ENCODE measurements at regions of chr4 and their contacts with region 1.

Region 1: GRCh38 chr4:119286377-119287002 is 35.4 kb downstream of the FABP2 start:
- DNase-seq: peak in 1 of 2 donors; percentile 77
- ATAC-seq: peak in 1 of 3 donors; percentile 58
- H3K4me3 ChIP-seq: no peak overlapping the region
- H3K4me3 Mint-ChIP-seq: no peak overlapping the region
- H3K27ac ChIP-seq: no peak overlapping the region
- H3K27ac Mint-ChIP-seq: no peak overlapping the region
- H3K4me1 ChIP-seq: no peaks in the 10 kb centered on the region
- H3K4me1 Mint-ChIP-seq: peaks cover 6 to 8% of the 10 kb centered on the region in 2 donors
- H3K27me3 ChIP-seq: no peaks in the 10 kb centered on the region
- H3K27me3 Mint-ChIP-seq: no peaks in the 10 kb centered on the region
- CTCF ChIP-seq: peak; percentile 76

Region 2: GRCh38 chr4:118981839-118982381 is 304.6 kb before region 1 on chr4:
- intact Hi-C with region 1: loop called (anchors 1 kb)
- DNase-seq: peak in 1 of 2 donors; percentile 70
- ATAC-seq: peak; percentile 72 to 85 (median 76)
- H3K4me3 ChIP-seq: no peak overlapping the region
- H3K4me3 Mint-ChIP-seq: no peak overlapping the region
- H3K27ac ChIP-seq: no peak overlapping the region
- H3K27ac Mint-ChIP-seq: no peak overlapping the region
- H3K4me1 ChIP-seq: no peaks in the 10 kb centered on the region
- H3K4me1 Mint-ChIP-seq: no peaks in the 10 kb centered on the region
- H3K27me3 ChIP-seq: no peaks in the 10 kb centered on the region
- H3K27me3 Mint-ChIP-seq: peaks cover 11 to 13% of the 10 kb centered on the region in 2 donors
- CTCF ChIP-seq: peak; percentile 64

Region 3: GRCh38 chr4:119041951-119042560 is 244.4 kb before region 1 on chr4:
- intact Hi-C with region 1: loop called (anchors 1 kb)
- DNase-seq: peak in 1 of 2 donors; percentile 85
- ATAC-seq: peak; percentile 80 to 89 (median 88)
- H3K4me3 ChIP-seq: no peak overlapping the region
- H3K4me3 Mint-ChIP-seq: no peak overlapping the region
- H3K27ac ChIP-seq: no peak overlapping the region
- H3K27ac Mint-ChIP-seq: no peak overlapping the region
- H3K4me1 ChIP-seq: peaks cover 3% of the 10 kb centered on the region
- H3K4me1 Mint-ChIP-seq: no peaks in the 10 kb centered on the region
- H3K27me3 ChIP-seq: no peaks in the 10 kb centered on the region
- H3K27me3 Mint-ChIP-seq: peaks cover 0 to 2% of the 10 kb centered on the region in 2 donors
- CTCF ChIP-seq: peak; percentile 71

Region 4: GRCh38 chr4:119212234-119212963 is 74.1 kb before region 1 on chr4 and contains the start of gene USP53:
- intact Hi-C with region 1: loop called (anchors 5 kb)
- DNase-seq: peak; percentile 92 to 99
- ATAC-seq: peak; percentile 94 to 99 (median 95)
- H3K4me3 ChIP-seq: peak within 1 kb of the TSS; percentile 64
- H3K4me3 Mint-ChIP-seq: peak within 1 kb of the TSS; percentile 98
- H3K27ac ChIP-seq: peak within 1 kb of the TSS; percentile 84
- H3K27ac Mint-ChIP-seq: peak within 1 kb of the TSS; percentile 81 to 93
- H3K4me1 ChIP-seq: peaks cover 7% of the 10 kb centered on the region
- H3K4me1 Mint-ChIP-seq: peaks cover 23 to 28% of the 10 kb centered on the region in 2 donors
- H3K27me3 ChIP-seq: no peaks in the 10 kb centered on the region
- H3K27me3 Mint-ChIP-seq: peaks cover 3 to 7% of the 10 kb centered on the region in 2 donors
- CTCF ChIP-seq: no peak
- total RNA-seq, gene USP53: 8.9 to 10.5 (median 9.3) TPM

Measured in natural killer cell (primary cell).